ENCODE measurements at regions of chr6 and their contacts with region 1.

Region 1: DNA sequence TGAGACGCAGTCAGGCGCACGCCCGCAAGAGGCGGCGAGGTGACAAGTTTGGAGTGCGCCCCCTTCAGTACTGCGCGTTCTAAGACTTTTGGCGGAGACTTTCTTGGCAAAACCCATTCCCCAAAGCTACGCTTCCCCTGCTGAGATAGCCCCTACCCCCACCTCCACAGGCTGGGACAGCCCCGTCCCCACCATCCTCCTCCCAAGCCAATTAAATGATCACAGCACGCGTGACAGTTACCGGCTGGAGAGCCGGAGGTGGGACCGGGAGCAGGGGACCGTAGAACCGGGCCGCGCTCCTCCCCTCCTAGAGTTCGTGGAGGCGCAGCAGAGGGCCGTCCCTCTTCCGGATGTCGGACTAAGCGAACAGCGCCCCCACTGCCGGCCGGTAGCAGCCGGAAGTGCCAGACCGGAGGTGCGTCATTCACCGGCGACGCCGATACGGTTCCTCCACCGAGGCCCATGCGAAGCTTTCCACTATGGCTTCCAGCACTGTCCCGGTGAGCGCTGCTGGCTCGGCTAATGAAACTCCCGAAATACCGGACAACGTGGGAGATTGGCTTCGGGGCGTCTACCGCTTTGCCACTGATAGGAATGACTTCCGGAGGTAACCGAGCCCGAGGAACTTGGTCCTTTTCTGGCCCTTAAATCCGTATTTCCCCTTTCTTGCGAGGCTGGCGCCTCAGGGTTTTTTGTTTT is at the start of gene TOMM6:
- DNase-seq: peak; percentile 91 to 97 (median 93)
- ATAC-seq: peak; percentile 77
- H3K4me3 ChIP-seq: peak within 1 kb of the TSS; percentile 78
- H3K4me3 Mint-ChIP-seq: peak within 1 kb of the TSS; percentile 92
- H3K27ac ChIP-seq: peak within 1 kb of the TSS; percentile 87 to 89
- H3K27ac Mint-ChIP-seq: peak within 1 kb of the TSS; percentile 96
- H3K4me1 ChIP-seq: peaks cover 23% of the 10 kb centered on the region
- H3K4me1 Mint-ChIP-seq: peaks cover 27% of the 10 kb centered on the region
- H3K27me3 ChIP-seq: no peaks in the 10 kb centered on the region
- H3K27me3 Mint-ChIP-seq: no peaks in the 10 kb centered on the region
- CTCF ChIP-seq: peak; percentile 90
- total RNA-seq, gene TOMM6: 78.8 to 83.2 TPM

Region 2: GRCh38 chr6:41602864-41603608 is 184.3 kb before region 1 on chr6:
- CTCF ChIA-PET with region 1: no interaction called
- POLR2A ChIA-PET with region 1: no interaction called
- intact Hi-C with region 1: loop called in 1 of 2 experiments (anchors 2 kb)
- DNase-seq: peak; percentile 54 to 86 (median 66)
- ATAC-seq: peak; percentile 80
- H3K4me3 ChIP-seq: no peak overlapping the region
- H3K4me3 Mint-ChIP-seq: no peak overlapping the region
- H3K27ac ChIP-seq: no peak overlapping the region
- H3K27ac Mint-ChIP-seq: no peak overlapping the region
- H3K4me1 ChIP-seq: peaks cover 8% of the 10 kb centered on the region
- H3K4me1 Mint-ChIP-seq: no peaks in the 10 kb centered on the region
- H3K27me3 ChIP-seq: peaks cover 0 to 3% of the 10 kb centered on the region in 2 experiments
- H3K27me3 Mint-ChIP-seq: no peaks in the 10 kb centered on the region
- CTCF ChIP-seq: peak; percentile 80

Region 3: GRCh38 chr6:41859356-41859755 is 72.0 kb after region 1 on chr6:
- CTCF ChIA-PET with region 1: no interaction called
- POLR2A ChIA-PET with region 1: no interaction called
- intact Hi-C with region 1: no loop called
- DNase-seq: no peak
- ATAC-seq: no peak
- H3K4me3 ChIP-seq: no peak overlapping the region
- H3K4me3 Mint-ChIP-seq: no peak overlapping the region
- H3K27ac ChIP-seq: no peak overlapping the region
- H3K27ac Mint-ChIP-seq: no peak overlapping the region
- H3K4me1 ChIP-seq: no peaks in the 10 kb centered on the region
- H3K4me1 Mint-ChIP-seq: no peaks in the 10 kb centered on the region
- H3K27me3 ChIP-seq: no peaks in the 10 kb centered on the region
- H3K27me3 Mint-ChIP-seq: no peaks in the 10 kb centered on the region
- CTCF ChIP-seq: no peak

Region 4: DNA sequence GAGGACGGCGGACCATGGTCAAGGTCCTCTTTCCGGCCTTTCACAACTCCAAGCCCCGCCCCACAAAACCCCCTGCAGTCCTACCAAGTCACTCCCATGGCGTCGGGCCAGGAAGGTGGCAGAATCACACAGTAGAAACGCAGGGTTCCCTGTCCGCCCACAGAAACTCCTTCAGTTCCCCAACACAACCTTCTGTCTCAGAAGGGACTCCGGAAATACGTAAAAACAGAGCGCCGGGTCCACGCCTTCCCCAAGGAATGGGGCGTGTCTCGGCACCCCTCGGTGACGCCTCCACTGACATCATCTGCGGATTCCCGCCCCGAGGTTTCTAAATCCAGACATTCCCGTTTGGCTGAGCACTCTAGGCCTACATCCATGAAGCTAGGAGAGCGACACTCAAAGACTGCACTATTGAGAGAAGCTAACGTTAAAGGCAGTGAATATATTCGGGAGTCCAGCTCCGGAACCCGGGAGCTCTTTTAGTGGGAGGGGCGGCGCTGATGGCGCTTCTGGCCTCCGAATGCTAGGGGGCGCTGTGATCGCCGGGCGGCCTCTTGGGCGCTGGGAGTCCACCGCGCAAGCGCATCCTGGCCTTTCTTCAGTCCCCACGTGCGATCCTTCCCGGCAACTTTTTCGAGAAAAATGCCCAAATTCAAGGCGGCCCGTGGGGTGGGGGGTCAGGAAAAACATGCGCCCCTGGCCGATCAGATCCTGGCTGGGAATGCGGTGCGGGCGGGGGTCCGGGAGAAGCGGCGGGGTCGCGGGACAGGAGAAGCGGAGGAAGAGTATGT is 133.7 kb after region 1 on chr6 and contains the starts of genes BYSL and MED20:
- CTCF ChIA-PET with region 1: interaction called, 53 read pairs
- POLR2A ChIA-PET with region 1: interaction called, 41 read pairs
- intact Hi-C with region 1: loop called (anchors 1 kb)
- DNase-seq: peak; percentile 89 to 97 (median 93)
- ATAC-seq: peak; percentile 90
- H3K4me3 ChIP-seq: peak within 1 kb of the TSS; percentile 78
- H3K4me3 Mint-ChIP-seq: peak within 1 kb of the TSS; percentile 99
- H3K27ac ChIP-seq: peak within 1 kb of the TSS; percentile 97 to 98
- H3K27ac Mint-ChIP-seq: peak within 1 kb of the TSS; percentile 94
- H3K4me1 ChIP-seq: peaks cover 31% of the 10 kb centered on the region
- H3K4me1 Mint-ChIP-seq: peaks cover 55% of the 10 kb centered on the region
- H3K27me3 ChIP-seq: no peaks in the 10 kb centered on the region
- H3K27me3 Mint-ChIP-seq: no peaks in the 10 kb centered on the region
- CTCF ChIP-seq: peak; percentile 97
- total RNA-seq, gene BYSL: 1.2 to 1.6 TPM
- total RNA-seq, gene MED20: 1.3 to 1.6 TPM

Region 5: DNA sequence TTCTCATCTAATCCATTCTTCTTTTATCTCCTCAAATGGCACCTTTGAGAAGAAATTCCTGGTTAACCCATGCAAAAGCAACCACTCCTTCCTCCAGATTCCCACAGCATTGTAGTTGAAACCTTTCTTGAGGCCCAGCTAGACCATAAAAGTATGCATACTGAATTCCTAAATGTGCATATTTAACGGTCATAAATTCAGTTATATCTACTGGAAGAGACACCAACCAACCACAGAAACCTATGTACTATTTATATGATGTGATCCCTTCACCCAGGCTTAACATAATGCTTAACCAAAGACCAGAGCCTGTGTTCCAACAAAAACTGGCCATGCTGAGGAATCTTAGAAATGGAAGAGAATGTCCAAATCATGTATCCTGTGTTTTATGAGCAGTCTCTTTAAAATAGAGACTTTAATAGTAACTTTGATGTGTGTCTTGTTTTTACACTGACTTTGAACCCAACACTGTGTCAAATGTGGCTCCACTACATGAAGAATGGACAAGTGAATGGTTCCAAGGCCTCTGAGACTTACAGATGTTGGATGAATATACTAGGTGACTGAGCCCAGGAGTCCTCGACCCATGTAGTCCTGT is 251.5 kb after region 1 on chr6:
- CTCF ChIA-PET with region 1: interaction called, 75 read pairs
- POLR2A ChIA-PET with region 1: interaction called, 34 read pairs
- intact Hi-C with region 1: loop called in 1 of 2 experiments (anchors 1 kb)
- DNase-seq: no peak
- ATAC-seq: no peak
- H3K4me3 ChIP-seq: peak overlapping the region; percentile 49
- H3K4me3 Mint-ChIP-seq: peak overlapping the region; percentile 88
- H3K27ac ChIP-seq: peak overlapping the region; percentile 60 to 61
- H3K27ac Mint-ChIP-seq: peak overlapping the region; percentile 89
- H3K4me1 ChIP-seq: peaks cover 98% of the 10 kb centered on the region
- H3K4me1 Mint-ChIP-seq: peaks cover 75% of the 10 kb centered on the region
- H3K27me3 ChIP-seq: no peaks in the 10 kb centered on the region
- H3K27me3 Mint-ChIP-seq: no peaks in the 10 kb centered on the region
- CTCF ChIP-seq: no peak

Region 6: DNA sequence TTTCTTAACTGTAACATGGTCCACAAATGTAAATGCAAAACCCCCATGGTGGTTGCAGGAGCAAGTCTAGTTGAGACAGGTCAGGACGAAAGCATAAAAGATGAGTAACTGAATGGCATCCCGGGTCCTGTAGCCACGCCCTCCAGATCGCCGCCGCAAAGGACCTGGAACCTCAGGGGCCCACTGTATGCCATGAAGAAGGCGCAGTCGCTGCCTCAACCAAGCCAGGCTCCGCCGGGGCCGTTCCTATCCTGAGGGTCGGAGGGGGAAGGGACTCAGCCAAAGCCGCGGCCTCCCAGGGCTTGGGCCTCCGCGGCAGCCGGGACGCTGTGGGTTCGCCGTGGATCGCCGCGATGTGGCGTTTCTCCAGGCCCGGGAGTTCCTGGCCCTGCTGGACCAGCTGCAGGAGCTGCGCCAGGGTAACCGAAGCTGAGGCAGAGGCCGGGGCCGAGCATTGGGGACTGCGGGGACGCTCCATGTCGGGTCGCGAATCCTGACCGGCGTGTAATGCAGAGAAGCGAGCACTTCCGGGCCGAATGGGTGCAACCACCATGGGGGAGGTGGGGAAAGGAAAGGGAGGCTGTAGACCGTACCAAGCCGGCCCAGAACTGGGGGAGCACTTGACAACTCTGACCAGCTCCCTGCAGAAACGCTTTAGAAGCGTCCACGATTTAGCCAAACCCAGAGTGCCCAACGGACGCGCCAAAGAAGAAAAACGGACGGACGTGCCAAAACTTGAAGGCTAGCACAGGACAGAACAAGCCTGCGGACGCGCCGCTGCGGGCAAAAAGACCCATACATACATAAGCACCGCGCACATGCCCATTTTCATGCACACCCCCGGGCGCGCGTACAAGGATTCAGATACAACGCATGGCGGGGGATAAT is 1103.2 kb after region 1 on chr6:
- CTCF ChIA-PET with region 1: no interaction called
- POLR2A ChIA-PET with region 1: no interaction called
- intact Hi-C with region 1: loop called in 1 of 2 experiments (anchors 10 kb)
- DNase-seq: peak; percentile 77 to 93 (median 87)
- ATAC-seq: peak; percentile 93
- H3K4me3 ChIP-seq: peak overlapping the region; percentile 94
- H3K4me3 Mint-ChIP-seq: peak overlapping the region; percentile 91
- H3K27ac ChIP-seq: peak overlapping the region; percentile 86 to 89
- H3K27ac Mint-ChIP-seq: peak overlapping the region; percentile 94
- H3K4me1 ChIP-seq: peaks cover 17% of the 10 kb centered on the region
- H3K4me1 Mint-ChIP-seq: peaks cover 16% of the 10 kb centered on the region
- H3K27me3 ChIP-seq: no peaks in the 10 kb centered on the region
- H3K27me3 Mint-ChIP-seq: no peaks in the 10 kb centered on the region
- CTCF ChIP-seq: no peak

Measured in CD4-positive, alpha-beta T cell (primary cell).